Activated CD4-positive, alpha-beta memory T cell treated with anti-CD3 and anti-CD28 coated beads for 36 hours (primary cell): ENCODE measurements at regions of chr12 and their contacts with region 1.

Region 1: DNA sequence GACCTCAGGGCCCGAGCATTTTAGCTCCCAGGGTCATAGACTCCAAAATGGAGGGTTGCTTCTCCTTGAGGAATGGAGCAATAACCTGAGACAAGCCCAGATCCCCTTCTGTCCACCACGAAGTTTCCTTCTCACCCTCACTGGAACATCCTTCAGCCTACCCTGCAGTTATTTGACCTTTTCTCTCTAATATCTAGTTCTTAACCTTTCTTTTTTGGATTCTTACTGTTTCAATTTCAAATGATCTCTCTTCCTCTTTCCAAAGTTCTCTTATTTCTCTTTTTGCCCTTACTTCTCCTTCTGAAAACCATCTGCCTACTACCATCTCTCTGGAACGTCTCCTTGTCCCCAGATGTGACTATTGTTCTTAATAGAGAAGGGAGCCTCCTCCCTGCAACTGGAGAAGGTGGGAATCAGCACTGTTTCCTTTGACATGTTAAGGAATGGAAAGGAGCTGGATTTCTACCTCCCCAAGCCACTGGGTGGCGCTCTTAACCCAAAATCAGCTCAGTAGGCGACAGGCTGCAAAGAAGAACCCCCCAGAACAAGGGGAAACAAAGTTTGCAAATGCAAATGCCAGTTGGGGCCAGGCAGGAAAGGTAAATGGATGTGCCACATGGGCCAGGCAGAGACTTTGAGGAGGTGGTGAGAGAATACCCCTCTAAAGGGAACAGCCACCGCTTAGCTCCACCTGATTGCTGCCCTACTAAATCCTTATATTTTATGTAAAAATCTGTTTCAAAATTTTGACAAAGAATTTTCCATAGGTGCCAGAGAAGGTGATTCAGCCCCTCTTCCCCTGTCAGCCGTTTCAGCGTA is 22.4 kb upstream of the PDE1B start:
- DNase-seq: peak; percentile 64
- H3K4me3 Mint-ChIP-seq: no peak overlapping the region
- H3K27ac Mint-ChIP-seq: peak overlapping the region; percentile 9
- H3K4me1 Mint-ChIP-seq: peaks cover 23% of the 10 kb centered on the region
- H3K27me3 Mint-ChIP-seq: no peaks in the 10 kb centered on the region

Region 2: DNA sequence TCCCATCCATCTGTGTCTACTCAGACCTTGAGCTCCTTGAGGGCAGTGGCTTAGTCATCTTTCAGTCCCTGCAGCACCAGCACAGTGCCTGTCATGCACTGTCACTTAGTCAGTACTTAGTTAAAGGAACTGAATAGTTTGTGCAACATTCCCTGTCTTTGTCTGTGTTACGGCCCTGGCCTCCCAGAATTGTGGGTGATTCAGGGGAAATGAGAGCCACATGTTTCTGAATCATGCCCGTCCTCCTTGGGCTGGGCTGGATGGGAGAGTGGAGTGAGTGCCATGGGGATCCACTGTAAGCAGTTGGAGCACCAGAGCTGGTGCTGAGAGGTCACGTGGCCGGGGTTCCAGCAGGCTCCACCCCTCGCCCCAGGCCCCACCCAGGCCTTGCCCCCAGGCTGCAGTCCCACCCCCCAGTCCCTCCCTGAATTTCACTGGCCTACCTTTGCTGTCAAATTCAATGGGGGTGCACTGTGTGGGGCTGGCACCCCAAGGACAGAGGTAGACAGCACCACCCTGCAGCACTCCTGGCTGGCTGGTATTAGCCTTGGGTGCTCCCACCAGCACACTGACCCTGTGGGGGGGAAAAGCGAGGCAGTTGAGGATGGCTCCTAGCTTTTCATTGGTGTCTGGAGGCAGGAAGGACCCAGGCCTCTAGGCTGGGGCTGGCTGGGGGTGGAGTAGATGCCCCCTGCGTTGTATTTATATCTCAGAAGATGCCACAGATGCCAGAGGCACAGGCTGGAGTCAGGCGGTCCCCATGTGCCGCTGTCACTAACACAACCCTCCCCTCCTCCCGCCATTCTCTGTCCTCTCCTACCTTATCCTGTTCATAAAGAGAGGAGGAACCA is 115.4 kb before region 1 on chr12:
- CTCF ChIA-PET with region 1: interaction called, 4 read pairs
- POLR2A ChIA-PET with region 1: no interaction called
- intact Hi-C with region 1: loop called (anchors 5 kb)
- DNase-seq: peak; percentile 77
- H3K4me3 Mint-ChIP-seq: no peak overlapping the region
- H3K27ac Mint-ChIP-seq: peak overlapping the region; percentile 96
- H3K4me1 Mint-ChIP-seq: peaks cover 63% of the 10 kb centered on the region
- H3K27me3 Mint-ChIP-seq: no peaks in the 10 kb centered on the region

Region 3: GRCh38 chr12:54497883-54498282 is 29.1 kb before region 1 on chr12:
- CTCF ChIA-PET with region 1: interaction called, 27 read pairs
- POLR2A ChIA-PET with region 1: interaction called, 3 read pairs
- intact Hi-C with region 1: loop called (anchors 1 kb)
- DNase-seq: no peak
- H3K4me3 Mint-ChIP-seq: peak overlapping the region; percentile 100
- H3K27ac Mint-ChIP-seq: peak overlapping the region; percentile 98
- H3K4me1 Mint-ChIP-seq: peaks cover 40% of the 10 kb centered on the region
- H3K27me3 Mint-ChIP-seq: no peaks in the 10 kb centered on the region

Region 4: DNA sequence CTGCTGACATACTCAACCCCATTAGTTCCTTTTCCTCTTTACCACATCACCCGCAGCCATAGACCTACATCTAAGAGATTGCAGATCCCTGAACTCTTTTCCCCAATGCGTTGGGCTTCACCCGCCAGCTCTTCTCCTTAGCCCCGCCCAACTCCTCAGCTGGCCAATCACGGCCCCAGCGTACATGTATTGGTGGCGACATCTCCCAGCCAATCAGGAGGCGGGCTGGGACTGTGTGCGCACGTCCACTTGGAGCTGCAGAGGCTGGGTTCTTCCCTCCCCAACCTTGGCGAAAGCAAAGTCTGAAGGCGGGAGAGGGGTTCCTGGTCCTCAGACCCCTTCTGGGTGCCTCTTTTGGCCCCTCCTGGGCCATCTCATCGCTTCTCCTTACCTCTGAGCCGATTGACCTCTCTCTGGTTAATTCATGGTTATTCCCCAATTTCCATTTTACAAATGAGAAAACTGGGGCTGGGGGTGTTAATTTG is 33.4 kb after region 1 on chr12:
- CTCF ChIA-PET with region 1: interaction called, 10 read pairs
- POLR2A ChIA-PET with region 1: interaction called, 5 read pairs
- intact Hi-C with region 1: loop called (anchors 2 kb)
- DNase-seq: peak; percentile 94
- H3K4me3 Mint-ChIP-seq: peak overlapping the region; percentile 69
- H3K27ac Mint-ChIP-seq: peak overlapping the region; percentile 74
- H3K4me1 Mint-ChIP-seq: peaks cover 23% of the 10 kb centered on the region
- H3K27me3 Mint-ChIP-seq: no peaks in the 10 kb centered on the region